ENCODE measurements at regions of chr13 and their contacts with region 1.

Region 1: GRCh38 chr13:22000191-22000590 is 329.3 kb downstream of the FGF9 start:
- DNase-seq: no peak
- ATAC-seq: no peak

Region 2: DNA sequence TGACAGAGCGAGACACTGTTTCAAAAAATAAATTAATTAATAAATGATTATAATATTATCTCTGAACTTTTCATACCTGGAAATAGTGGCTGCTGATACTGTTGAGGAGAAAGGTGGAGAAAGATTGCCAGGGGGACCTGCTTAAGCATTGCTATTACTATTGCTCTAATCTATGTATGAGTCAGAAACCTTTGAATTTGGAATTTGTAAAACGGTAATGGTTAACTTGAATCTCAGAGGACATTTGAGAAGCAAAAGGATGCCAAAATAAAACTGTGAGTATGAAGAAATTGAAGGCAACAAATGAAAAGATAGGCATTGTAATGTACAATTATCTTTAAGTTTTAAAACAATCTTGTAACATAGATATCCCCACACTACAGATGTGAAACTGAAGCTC is 818.5 kb before region 1 on chr13:
- intact Hi-C with region 1: loop called (anchors 5 kb)
- DNase-seq: no peak
- ATAC-seq: no peak

Region 3: DNA sequence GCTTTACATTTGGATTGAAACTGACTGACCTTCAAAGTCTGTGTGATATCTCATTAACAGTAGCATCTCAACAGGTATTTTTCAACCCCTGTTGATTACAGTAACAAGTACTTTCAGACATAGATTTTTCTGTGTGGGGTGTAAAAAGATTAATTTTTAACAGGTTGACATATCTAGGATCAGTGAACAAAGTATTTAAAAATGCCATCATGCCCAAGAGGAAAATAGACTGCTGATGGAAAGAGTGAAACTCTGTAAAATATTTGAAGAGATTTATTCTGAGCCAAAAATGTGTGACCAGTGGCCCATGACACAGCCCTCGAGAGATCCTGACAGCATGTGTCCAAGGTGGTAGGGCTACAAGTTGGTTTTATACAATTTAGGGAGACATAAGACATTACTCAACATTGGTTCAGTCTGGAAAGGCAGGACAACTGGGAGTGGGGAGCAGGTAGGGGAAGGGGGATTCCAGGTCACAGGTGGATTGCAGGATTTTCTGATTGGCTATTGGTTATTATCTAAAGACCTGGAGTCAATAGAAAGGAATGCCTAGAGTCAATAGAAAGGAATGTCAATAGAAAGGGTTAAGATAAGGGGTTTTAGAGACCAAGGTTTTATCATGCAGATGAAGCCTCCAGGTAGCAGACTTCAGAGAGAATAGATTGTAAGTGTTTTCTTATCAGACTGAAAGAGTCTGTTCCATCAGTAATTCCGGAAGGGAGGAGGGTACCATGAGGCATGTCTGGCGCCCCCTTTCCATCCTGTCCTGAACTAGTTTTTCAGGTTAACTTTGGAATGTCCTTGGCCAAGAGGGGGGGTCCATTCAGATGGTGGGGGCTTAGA is 1599.1 kb after region 1 on chr13:
- intact Hi-C with region 1: no loop called
- DNase-seq: no peak
- ATAC-seq: no peak

Measured in sciatic nerve (tissue), 2 donors.